IMR-90 (cell line): ENCODE measurements at regions of chr17 and their contacts with region 1.

Region 1: DNA sequence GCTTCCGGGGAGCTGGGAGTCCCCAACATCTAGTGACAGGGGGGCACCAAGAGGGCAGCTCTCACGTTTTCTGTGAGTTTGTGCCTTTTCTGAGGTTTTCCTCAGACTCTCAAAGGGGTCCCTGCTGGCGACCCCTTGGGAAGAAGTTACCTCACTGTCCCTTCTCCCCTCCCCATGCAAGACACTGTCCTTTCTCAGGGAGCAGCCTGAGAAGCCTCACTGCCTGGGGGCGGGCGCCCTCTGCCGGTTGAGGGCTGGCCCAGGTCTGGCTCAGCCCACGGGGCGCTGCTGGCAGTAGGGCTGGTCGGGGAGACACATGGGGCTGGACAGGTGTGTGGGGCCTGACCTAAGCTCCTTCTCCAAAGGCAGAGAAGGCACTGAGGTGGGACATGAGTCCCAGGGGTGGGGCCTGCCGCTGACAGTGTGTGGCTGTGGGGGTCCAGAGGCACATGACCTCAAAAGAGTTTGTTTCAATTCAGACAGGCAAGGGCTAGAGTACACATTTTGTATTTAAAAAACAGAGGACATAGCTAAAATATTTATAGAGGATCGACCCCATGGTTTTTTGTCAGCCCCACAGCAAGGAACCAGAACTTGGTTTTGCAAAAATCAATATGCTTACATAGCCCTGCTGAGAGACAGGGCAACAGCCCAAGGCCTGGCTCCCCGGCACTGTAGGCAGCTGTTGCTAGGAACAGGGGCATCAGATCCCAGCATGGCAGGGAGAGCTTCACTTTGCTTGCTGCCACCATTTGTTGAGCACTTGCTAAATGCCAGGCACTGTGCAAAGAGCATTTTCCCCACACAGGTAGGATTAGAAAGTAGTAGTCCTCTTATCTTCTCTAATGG is 18.5 kb upstream of the ALDH3A1 start:
- DNase-seq: peak; percentile 41
- ATAC-seq: peak; percentile 89
- H3K4me3 ChIP-seq: no peak overlapping the region
- H3K27ac ChIP-seq: no peak overlapping the region
- H3K4me1 ChIP-seq: peaks cover 3% of the 10 kb centered on the region
- H3K27me3 ChIP-seq: peaks cover 13% of the 10 kb centered on the region
- CTCF ChIP-seq: peak; percentile 89
- POLR2A ChIP-seq: no peak
- RAD21 ChIP-seq: peak; percentile 92

Region 2: DNA sequence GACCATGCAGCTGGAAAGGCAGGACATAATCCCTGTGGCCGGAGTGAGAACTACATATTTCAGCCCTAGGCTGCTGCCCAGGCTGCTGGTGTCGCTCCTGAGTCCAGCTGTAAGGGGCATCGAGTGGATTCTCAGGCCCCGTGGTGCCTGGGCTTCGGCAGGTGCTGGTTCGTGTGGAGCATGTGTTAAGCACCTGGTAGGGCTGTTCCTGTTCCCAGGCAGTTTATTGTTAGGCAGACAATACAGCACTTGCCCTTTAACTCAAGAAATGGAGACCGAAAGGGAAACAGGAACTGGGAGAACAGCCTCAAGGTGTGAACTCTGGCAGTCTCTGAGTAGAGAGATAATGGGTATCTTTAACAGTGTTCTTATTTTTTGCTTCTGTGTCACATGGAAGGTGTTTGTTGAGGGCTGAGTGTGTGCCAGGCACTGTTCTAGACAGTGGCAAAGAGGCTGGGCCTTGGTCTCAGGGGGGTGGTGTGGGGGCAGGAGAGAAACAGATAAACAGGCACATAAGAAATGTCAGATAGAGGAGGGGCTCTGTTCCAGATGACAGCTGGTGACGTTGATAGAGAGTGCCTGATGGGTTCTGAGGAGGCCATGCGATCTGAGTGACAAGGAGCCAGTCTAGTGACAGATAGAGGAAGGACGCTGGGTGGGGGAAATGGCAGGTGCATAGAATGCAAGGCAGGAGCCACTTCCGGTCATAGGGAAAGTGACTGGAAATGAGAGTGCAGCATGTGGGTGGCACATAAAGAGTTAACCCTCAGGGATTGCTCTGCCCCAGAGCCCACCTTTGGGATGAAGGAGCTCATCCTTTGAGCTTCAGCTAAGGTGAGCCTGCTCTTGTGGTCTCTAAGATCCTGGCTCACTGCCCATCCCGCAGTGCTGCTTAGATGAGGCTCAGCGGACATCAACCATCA is 495.7 kb before region 1 on chr17:
- CTCF ChIA-PET with region 1: no interaction called
- POLR2A ChIA-PET with region 1: no interaction called
- dilution Hi-C with region 1: no loop called
- in situ Hi-C with region 1: no loop called
- intact Hi-C with region 1: no loop called
- DNase-seq: no peak
- ATAC-seq: no peak
- H3K4me3 ChIP-seq: no peak overlapping the region
- H3K27ac ChIP-seq: no peak overlapping the region
- H3K4me1 ChIP-seq: peaks cover 7% of the 10 kb centered on the region
- H3K27me3 ChIP-seq: no peaks in the 10 kb centered on the region
- CTCF ChIP-seq: no peak
- POLR2A ChIP-seq: no peak
- RAD21 ChIP-seq: no peak

Region 3: GRCh38 chr17:19362277-19363113 is 404.2 kb before region 1 on chr17 and contains the start of gene B9D1:
- CTCF ChIA-PET with region 1: interaction called, 13 read pairs
- POLR2A ChIA-PET with region 1: no interaction called
- dilution Hi-C with region 1: no loop called
- in situ Hi-C with region 1: loop called (anchors 5 kb)
- intact Hi-C with region 1: loop called (anchors 1 kb)
- DNase-seq: peak; percentile 89
- ATAC-seq: peak; percentile 93
- H3K4me3 ChIP-seq: peak within 1 kb of the TSS; percentile 77
- H3K27ac ChIP-seq: peak within 1 kb of the TSS; percentile 51
- H3K4me1 ChIP-seq: peaks cover 10% of the 10 kb centered on the region
- H3K27me3 ChIP-seq: no peaks in the 10 kb centered on the region
- CTCF ChIP-seq: peak; percentile 99
- POLR2A ChIP-seq: peak; percentile 64; the same call in 1 of the 2 replicates
- RAD21 ChIP-seq: peak; percentile 99
- total RNA-seq, gene B9D1: 23.3 and 42.5 TPM in 2 replicates

Region 4: DNA sequence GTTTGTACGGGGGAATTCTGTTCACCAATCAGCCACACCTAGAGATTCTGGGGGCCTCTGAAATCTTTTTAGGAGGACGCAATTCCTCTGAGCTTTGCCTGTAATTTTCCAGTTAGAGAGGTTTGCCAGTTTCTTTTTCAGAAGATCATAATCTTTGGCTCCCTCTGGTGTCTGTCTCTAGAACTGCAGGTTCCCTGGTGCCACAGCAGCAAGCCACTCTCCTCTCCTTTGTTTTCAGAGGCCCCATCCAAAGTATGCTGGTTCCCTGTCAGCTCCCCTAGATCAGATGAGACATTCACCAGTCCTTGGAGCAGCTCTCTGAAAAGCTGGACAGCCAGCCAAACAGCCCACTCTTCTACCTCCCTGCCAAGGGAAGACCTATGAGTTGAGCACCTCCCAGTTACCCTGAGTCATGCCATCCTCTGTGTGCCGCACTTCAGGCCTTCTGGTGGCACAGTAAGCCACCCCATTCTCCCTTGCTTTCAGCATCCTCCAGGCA is 319.5 kb before region 1 on chr17:
- CTCF ChIA-PET with region 1: interaction called, 8 read pairs
- POLR2A ChIA-PET with region 1: no interaction called
- dilution Hi-C with region 1: no loop called
- in situ Hi-C with region 1: no loop called
- intact Hi-C with region 1: loop called (anchors 2 kb)
- DNase-seq: peak; percentile 70
- ATAC-seq: peak; percentile 65
- H3K4me3 ChIP-seq: no peak overlapping the region
- H3K27ac ChIP-seq: peak overlapping the region; percentile 65; the same call in 1 of the 2 replicates
- H3K4me1 ChIP-seq: peaks cover 17% of the 10 kb centered on the region
- H3K27me3 ChIP-seq: peaks cover 2% of the 10 kb centered on the region; the same call in 1 of the 2 replicates
- CTCF ChIP-seq: peak; percentile 90
- POLR2A ChIP-seq: 0 out of 2 replicates have a peak, but pooled peaks have one; percentile 21
- RAD21 ChIP-seq: peak; percentile 88

Region 5: GRCh38 chr17:19520641-19521040 is 246.0 kb before region 1 on chr17:
- CTCF ChIA-PET with region 1: interaction called, 3 read pairs
- POLR2A ChIA-PET with region 1: no interaction called
- dilution Hi-C with region 1: no loop called
- in situ Hi-C with region 1: loop called (anchors 5 kb)
- intact Hi-C with region 1: no loop called
- DNase-seq: no peak
- ATAC-seq: no peak
- H3K4me3 ChIP-seq: no peak overlapping the region
- H3K27ac ChIP-seq: no peak overlapping the region
- H3K4me1 ChIP-seq: no peaks in the 10 kb centered on the region
- H3K27me3 ChIP-seq: peaks cover 21% of the 10 kb centered on the region
- CTCF ChIP-seq: no peak
- POLR2A ChIP-seq: no peak
- RAD21 ChIP-seq: no peak

Region 6: GRCh38 chr17:19753049-19753444 is 13.6 kb before region 1 on chr17:
- CTCF ChIA-PET with region 1: interaction called, 11 read pairs
- POLR2A ChIA-PET with region 1: no interaction called
- dilution Hi-C with region 1: no loop called
- in situ Hi-C with region 1: no loop called
- intact Hi-C with region 1: no loop called
- DNase-seq: peak; percentile 60
- ATAC-seq: peak; percentile 92
- H3K4me3 ChIP-seq: no peak overlapping the region
- H3K27ac ChIP-seq: no peak overlapping the region
- H3K4me1 ChIP-seq: peaks cover 4% of the 10 kb centered on the region
- H3K27me3 ChIP-seq: peaks cover 36% of the 10 kb centered on the region
- CTCF ChIP-seq: no peak
- POLR2A ChIP-seq: no peak
- RAD21 ChIP-seq: no peak

Region 7: DNA sequence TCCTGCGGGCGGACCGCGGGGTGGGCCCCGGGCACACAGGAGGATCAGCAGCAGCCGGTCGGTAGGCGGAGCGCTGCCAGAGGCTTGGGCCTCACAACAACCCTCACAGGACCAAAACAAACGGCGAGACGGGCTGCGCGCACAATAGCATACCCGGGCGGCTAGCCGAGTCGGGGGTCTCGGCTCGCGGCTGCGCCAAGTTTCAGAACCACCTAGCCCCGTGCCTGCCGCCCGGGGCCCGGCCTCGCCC is 100.3 kb after region 1 on chr17:
- CTCF ChIA-PET with region 1: no interaction called
- POLR2A ChIA-PET with region 1: no interaction called
- dilution Hi-C with region 1: no loop called
- in situ Hi-C with region 1: no loop called
- intact Hi-C with region 1: no loop called
- DNase-seq: peak; percentile 54
- ATAC-seq: peak; percentile 64
- H3K4me3 ChIP-seq: peak overlapping the region; percentile 66
- H3K27ac ChIP-seq: peak overlapping the region; percentile 56
- H3K4me1 ChIP-seq: no peaks in the 10 kb centered on the region
- H3K27me3 ChIP-seq: no peaks in the 10 kb centered on the region
- CTCF ChIP-seq: peak; percentile 31
- POLR2A ChIP-seq: no peak
- RAD21 ChIP-seq: no peak; the same call in 1 of the 2 replicates